ENCODE measurements at regions of chr5 and their contacts with region 1.

Region 1: DNA sequence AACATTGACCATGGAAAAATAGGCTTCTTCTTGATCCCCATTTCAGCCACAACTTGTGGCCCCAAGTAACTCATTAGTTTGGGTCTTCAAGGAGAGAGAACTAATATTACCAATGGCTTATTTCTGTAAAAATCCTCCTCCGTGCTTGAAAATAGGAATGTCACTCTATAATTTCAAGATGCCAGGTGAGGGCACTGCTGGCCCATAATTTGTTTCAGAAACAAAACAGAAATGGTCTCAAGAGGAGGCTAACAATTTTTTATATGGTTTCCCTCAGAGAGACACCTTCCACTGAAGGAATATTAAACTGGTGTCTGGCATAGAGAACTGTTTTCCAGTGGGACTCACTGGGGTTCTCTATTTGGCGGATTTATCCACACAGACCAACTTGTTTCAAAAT is 437.0 kb upstream of the TRPC7 start:
- DNase-seq: no peak
- ATAC-seq: peak in 2 of 4 donors; percentile 51 to 54
- H3K4me3 ChIP-seq: no peak overlapping the region
- H3K27ac ChIP-seq: no peak overlapping the region
- H3K4me1 ChIP-seq: no peaks in the 10 kb centered on the region
- H3K27me3 ChIP-seq: no peaks in the 10 kb centered on the region
- CTCF ChIP-seq: peak; percentile 40

Region 2: DNA sequence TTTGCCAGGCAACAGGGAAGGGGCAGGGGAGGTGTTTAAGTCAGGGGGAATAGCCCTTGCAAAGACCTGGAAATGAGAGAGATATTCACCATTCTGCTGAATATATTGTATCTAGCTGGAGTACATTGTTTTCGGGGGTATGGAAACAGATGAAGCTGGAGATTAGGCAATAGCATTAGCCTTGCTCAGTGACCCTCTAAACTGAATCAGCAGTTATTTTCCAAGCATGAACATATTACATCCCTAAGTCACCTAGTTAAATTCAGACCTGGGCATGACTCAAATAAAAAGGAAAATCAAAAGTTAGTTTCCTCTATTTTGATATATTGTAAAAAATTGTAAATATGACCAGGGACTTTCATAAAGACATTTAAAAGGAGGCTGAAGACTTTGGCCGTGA is 107.5 kb after region 1 on chr5:
- intact Hi-C with region 1: no loop called
- DNase-seq: no peak
- ATAC-seq: no peak
- H3K4me3 ChIP-seq: no peak overlapping the region
- H3K27ac ChIP-seq: no peak overlapping the region
- H3K4me1 ChIP-seq: no peaks in the 10 kb centered on the region
- H3K27me3 ChIP-seq: no peaks in the 10 kb centered on the region
- CTCF ChIP-seq: no peak

Region 3: DNA sequence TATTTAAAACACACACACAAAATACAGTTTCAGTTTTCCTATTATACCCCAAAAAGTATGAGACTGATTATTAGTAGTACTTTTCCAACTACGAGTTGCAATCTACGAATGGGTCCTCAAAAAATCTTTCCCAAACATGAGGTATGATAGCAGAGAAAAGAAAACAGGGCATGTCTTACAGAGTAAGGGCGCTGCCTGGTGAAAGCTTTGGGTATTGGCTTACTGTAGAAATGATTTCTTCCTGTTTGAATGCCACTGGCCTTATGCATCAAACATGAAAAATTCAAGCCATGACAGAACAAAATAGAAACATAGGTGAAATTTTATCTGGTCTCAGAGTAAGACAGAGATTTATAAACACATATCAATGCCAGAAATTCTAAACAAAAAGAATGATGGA is 248.8 kb after region 1 on chr5:
- intact Hi-C with region 1: loop called in 1 of 2 experiments (anchors 10 kb)
- DNase-seq: no peak
- ATAC-seq: no peak
- H3K4me3 ChIP-seq: no peak overlapping the region
- H3K27ac ChIP-seq: no peak overlapping the region
- H3K4me1 ChIP-seq: no peaks in the 10 kb centered on the region
- H3K27me3 ChIP-seq: no peaks in the 10 kb centered on the region
- CTCF ChIP-seq: no peak

Region 4: DNA sequence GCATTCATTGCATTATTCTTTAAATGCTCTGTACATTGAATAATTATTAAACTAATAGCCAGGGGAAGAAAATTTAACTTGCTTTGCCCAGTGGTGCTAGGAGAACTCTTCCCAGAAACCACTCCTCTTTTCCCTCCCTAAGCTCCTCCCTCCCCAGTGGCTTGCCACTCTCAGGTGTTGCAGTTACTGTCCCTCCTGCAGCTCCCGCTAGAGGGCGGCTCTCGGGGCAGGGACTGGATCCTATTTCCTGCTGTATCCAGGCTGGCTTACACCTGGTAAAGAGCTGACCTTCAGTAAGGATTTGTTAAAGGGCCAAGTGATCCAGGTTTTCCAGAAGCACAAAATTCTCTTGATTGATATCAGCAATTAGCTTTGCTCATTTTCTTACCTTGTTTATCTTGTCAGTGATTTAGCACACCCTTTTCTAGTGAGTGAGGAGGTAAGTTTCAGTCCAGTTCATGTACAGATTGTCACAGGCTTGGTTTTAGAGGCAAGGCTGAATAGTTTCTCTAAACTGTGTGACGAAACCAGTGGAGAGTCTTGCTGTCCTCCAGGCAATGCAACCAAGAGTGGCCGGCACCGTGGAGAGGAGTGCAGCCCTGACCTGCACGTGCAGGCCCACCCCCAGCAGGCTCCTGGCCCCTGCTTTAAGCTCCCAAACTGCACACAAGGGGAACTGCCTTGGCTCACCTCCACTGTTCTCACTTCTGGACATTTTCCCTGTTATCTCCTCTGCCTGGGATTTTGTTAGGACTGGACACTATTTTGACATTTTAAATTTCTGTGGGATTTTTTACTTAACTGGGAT is 273.0 kb after region 1 on chr5:
- intact Hi-C with region 1: loop called in 1 of 2 experiments (anchors 10 kb)
- DNase-seq: peak in 1 of 2 donors; percentile 34
- ATAC-seq: peak; percentile 49 to 79 (median 70)
- H3K4me3 ChIP-seq: no peak overlapping the region
- H3K27ac ChIP-seq: no peak overlapping the region
- H3K4me1 ChIP-seq: no peaks in the 10 kb centered on the region
- H3K27me3 ChIP-seq: no peaks in the 10 kb centered on the region
- CTCF ChIP-seq: peak; percentile 20

Region 5: DNA sequence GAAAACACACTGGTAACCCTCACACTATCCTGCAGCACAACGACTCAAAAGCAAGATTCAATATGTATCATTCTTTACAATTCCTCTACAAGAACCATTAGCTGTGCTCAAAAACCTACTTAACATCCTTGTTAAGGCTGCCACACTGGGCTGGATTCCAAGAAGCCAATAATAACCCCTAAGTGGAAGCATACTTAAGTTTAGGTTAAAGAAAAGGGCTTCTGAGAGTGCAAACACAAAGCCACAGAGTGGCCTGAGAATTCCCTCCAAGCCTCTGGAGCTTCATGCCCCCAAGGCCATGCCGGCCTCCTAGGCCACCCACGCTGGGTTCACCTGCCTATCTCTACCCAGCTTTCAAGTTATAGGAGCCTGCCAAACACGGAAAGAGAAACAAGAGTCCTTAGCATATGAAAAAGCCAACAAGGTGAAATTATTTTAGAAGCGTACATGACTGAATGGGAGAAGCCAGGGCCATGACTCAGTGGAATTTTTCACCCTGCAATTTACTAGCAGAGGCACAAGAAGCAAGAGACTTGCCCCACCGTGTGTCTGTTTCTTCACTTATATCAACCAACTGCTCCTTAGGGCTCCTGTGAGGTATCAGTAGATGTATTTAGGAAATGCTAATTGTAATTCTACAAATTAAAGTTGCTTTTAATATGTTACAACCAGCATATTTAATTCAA is 403.8 kb after region 1 on chr5:
- intact Hi-C with region 1: loop called (anchors 5 to 10 kb)
- DNase-seq: no peak
- ATAC-seq: peak in 3 of 4 donors; percentile 31 to 56 (median 39)
- H3K4me3 ChIP-seq: no peak overlapping the region
- H3K27ac ChIP-seq: no peak overlapping the region
- H3K4me1 ChIP-seq: peaks cover 3% of the 10 kb centered on the region
- H3K27me3 ChIP-seq: no peaks in the 10 kb centered on the region
- CTCF ChIP-seq: no peak

Region 6: DNA sequence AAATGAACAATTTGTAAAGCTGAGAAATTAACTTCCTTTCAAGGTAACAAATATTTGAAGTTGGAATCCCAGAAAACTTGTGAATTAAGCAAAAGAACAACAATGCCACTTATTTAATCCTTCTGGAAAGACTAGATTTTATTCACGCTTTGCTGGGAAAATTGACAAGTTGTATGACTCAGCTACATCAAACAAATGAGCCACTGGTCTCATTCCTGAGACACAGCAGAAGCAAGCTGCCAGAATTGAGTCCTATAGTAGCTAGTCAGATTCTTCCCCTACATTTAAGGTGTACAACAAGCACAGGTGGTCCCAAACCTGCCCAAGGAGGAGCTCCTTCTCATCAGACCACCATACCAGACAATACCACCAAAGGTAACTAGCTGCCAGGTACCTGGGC is 416.1 kb after region 1 on chr5:
- intact Hi-C with region 1: loop called (anchors 5 to 10 kb)
- DNase-seq: no peak
- ATAC-seq: no peak
- H3K4me3 ChIP-seq: no peak overlapping the region
- H3K27ac ChIP-seq: no peak overlapping the region
- H3K4me1 ChIP-seq: peaks cover 9% of the 10 kb centered on the region
- H3K27me3 ChIP-seq: peaks cover 0 to 2% (median 0%) of the 10 kb centered on the region in 3 donors
- CTCF ChIP-seq: no peak

Region 7: DNA sequence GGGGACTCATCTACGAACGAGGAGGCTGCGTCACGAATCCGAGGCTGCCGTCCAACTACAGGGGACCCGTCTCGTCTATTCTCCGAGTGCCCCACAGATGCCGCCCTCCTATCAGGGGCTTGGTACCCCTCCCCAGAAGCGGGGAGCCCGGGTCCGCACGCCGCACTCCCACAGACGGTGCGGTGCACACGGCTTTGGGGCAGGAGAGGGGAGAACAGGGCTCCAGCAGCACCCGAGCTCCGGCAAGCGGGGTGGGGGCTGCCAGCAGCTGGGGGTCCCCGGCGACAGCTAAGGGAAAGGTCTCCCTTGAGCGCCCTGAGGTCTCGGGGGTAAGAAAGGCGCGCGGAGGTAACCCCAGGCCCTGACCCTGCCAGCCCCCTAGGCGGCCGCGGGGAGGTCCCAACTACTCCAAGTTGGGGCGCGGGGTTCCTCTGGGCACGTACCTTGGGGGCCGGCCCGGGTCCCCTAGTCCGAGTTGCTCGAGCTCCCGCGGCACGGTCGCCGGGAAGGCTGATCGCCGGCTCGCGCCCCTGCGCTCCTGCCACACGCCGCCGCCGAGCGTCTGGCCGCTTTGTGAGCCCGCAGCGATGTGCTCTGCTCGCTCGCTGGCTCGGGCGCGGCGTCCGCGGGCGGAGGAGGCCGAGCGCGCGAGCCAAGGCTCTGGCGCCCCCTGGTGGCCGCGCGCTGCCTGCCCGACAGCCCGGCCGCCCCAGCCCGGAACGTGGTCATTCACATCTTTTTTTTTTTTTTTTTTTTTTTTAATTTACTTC is 696.5 kb after region 1 on chr5 and contains the start of gene SPOCK1:
- intact Hi-C with region 1: loop called (anchors 5 to 10 kb)
- DNase-seq: peak; percentile 81 to 86
- ATAC-seq: peak; percentile 92 to 96 (median 96)
- H3K4me3 ChIP-seq: peak within 1 kb of the TSS; percentile 65
- H3K27ac ChIP-seq: no peak within 1 kb of the TSS
- H3K4me1 ChIP-seq: no peaks in the 10 kb centered on the region
- H3K27me3 ChIP-seq: peaks cover 0 to 4% (median 0%) of the 10 kb centered on the region in 3 donors
- CTCF ChIP-seq: peak; percentile 85
- total RNA-seq, gene SPOCK1: 11.3 to 52.7 (median 29.3) TPM

Measured in psoas muscle (tissue), 8 donors.